ENCODE measurements at regions of chr5 and their contacts with region 1.

Region 1: DNA sequence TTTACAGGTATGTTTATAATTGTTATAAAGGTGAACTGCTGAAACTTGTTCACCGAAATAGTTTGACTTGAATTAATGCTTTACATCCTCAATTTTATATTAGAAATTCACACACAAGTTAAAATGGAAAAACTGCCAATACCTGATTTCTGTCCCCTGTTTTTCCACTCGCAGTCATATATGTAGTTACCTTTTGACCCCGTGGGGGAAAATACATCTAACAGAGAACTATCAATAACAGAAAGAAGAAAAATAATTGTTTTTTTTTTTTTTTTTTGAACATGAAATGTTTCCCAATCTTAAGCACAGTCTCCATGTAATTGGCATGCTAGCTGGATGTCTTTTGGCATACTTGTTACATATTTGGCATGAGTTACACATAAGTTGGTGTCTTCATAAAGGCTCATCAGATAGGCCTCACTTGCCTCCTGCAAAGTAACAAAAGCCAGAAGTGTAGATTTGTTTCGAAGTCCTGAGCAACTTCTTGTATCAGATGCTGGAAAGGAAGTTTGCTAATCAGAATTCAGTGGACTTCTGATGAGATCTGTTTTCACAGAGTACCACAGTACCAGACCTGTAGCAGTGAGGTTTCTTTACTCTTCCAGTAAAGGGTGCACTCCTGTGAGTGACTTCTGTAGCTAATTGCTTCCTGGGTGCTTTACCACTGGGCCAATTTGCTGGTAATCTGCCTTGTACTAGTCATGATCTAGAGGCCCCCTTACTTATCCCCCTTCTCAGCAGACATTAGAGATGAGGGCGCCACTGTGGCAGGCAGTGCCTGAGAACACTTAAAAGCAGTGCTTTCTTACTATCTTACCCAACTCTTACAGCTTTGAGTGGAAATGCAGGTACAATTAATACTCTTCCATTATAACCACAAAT is 36.2 kb upstream of the CXXC5 start:
- DNase-seq: no peak
- ATAC-seq: peak; percentile 90
- H3K4me3 ChIP-seq: no peak overlapping the region
- H3K27ac ChIP-seq: peak overlapping the region; percentile 45; the same call in 1 of the 2 replicates
- H3K4me1 ChIP-seq: peaks cover 9% of the 10 kb centered on the region; the same call in 1 of the 2 replicates
- H3K27me3 ChIP-seq: no peaks in the 10 kb centered on the region
- CTCF ChIP-seq: no peak
- EP300 ChIP-seq: no peak
- POLR2A ChIP-seq: no peak
- RAD21 ChIP-seq: no peak

Region 2: DNA sequence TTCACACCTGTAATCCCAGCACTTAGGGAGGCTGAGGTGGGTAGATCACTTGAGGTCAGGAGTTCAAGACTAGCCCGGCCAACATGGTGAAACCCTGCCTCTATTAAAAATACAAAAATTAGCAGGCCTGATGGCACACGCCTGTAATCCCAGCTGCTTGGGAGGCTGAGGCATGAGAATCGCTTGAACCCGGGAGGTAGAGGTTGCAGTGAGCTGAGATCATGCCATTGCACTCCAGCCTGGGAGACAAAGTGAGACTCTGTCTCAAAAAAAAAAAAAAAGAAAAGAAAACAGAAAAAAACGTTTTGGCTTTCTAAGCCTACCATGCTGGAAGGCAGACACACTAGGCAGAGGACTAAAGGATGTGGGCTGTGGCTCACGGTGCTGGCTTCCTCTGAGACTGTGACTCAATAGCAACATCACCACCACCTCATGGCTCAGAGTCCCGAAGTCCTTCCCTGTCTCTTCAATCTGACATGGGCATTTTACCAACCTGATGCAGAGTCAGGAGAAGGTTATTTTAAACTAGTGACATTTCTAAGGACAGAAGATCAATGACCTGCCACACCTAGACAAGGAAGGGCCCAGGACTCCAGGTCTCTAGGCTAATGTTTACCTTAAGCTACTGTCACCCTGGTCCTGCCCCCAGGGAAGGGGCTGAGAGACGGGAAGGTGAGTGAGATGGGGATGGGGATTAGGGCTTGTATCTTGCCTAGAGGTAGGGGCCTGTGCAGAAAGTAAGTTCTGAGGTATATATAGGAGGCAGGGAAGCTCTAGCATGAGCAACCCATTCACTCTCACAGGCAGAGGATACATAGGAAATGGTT is 153.2 kb before region 1 on chr5:
- CTCF ChIA-PET with region 1: no interaction called
- POLR2A ChIA-PET with region 1: no interaction called
- RAD21 ChIA-PET with region 1: no interaction called
- SMC1A ChIA-PET with region 1: no interaction called
- in situ Hi-C with region 1: no loop called
- intact Hi-C with region 1: no loop called
- DNase-seq: peak; percentile 60
- ATAC-seq: peak; percentile 70
- H3K4me3 ChIP-seq: no peak overlapping the region
- H3K27ac ChIP-seq: peak overlapping the region; percentile 93
- H3K4me1 ChIP-seq: peaks cover 45% of the 10 kb centered on the region
- H3K27me3 ChIP-seq: no peaks in the 10 kb centered on the region
- CTCF ChIP-seq: no peak
- EP300 ChIP-seq: no peak
- POLR2A ChIP-seq: no peak
- RAD21 ChIP-seq: no peak

Region 3: GRCh38 chr5:139600336-139600949 is 11.5 kb before region 1 on chr5:
- CTCF ChIA-PET with region 1: interaction called, 6 read pairs
- POLR2A ChIA-PET with region 1: interaction called, 10 read pairs
- RAD21 ChIA-PET with region 1: no interaction called
- SMC1A ChIA-PET with region 1: interaction called, 12 read pairs
- in situ Hi-C with region 1: no loop called
- intact Hi-C with region 1: no loop called
- DNase-seq: no peak
- ATAC-seq: no peak
- H3K4me3 ChIP-seq: no peak overlapping the region
- H3K27ac ChIP-seq: no peak overlapping the region
- H3K4me1 ChIP-seq: no peaks in the 10 kb centered on the region
- H3K27me3 ChIP-seq: no peaks in the 10 kb centered on the region
- CTCF ChIP-seq: no peak
- EP300 ChIP-seq: no peak
- POLR2A ChIP-seq: no peak
- RAD21 ChIP-seq: no peak

Measured in GM12878 (cell line).